ENCODE measurements at regions of chr17 and their contacts with region 1.

Region 1: GRCh38 chr17:76681222-76682137 is 29.3 kb downstream of the MXRA7 start:
- DNase-seq: no peak
- H3K4me3 ChIP-seq: no peak overlapping the region
- H3K27me3 ChIP-seq: no peaks in the 10 kb centered on the region
- CTCF ChIP-seq: peak; percentile 87

Region 2: GRCh38 chr17:76523084-76524037 is 158.1 kb before region 1 on chr17:
- CTCF ChIA-PET with region 1: interaction called, 21 read pairs
- POLR2A ChIA-PET with region 1: no interaction called
- DNase-seq: no peak
- H3K4me3 ChIP-seq: no peak overlapping the region
- H3K27me3 ChIP-seq: no peaks in the 10 kb centered on the region
- CTCF ChIP-seq: peak; percentile 100

Region 3: GRCh38 chr17:76623271-76624146 is 58.0 kb before region 1 on chr17:
- CTCF ChIA-PET with region 1: interaction called, 14 read pairs
- POLR2A ChIA-PET with region 1: no interaction called
- DNase-seq: peak; percentile 48
- H3K4me3 ChIP-seq: no peak overlapping the region
- H3K27me3 ChIP-seq: peaks cover 11% of the 10 kb centered on the region
- CTCF ChIP-seq: peak; percentile 91

Region 4: DNA sequence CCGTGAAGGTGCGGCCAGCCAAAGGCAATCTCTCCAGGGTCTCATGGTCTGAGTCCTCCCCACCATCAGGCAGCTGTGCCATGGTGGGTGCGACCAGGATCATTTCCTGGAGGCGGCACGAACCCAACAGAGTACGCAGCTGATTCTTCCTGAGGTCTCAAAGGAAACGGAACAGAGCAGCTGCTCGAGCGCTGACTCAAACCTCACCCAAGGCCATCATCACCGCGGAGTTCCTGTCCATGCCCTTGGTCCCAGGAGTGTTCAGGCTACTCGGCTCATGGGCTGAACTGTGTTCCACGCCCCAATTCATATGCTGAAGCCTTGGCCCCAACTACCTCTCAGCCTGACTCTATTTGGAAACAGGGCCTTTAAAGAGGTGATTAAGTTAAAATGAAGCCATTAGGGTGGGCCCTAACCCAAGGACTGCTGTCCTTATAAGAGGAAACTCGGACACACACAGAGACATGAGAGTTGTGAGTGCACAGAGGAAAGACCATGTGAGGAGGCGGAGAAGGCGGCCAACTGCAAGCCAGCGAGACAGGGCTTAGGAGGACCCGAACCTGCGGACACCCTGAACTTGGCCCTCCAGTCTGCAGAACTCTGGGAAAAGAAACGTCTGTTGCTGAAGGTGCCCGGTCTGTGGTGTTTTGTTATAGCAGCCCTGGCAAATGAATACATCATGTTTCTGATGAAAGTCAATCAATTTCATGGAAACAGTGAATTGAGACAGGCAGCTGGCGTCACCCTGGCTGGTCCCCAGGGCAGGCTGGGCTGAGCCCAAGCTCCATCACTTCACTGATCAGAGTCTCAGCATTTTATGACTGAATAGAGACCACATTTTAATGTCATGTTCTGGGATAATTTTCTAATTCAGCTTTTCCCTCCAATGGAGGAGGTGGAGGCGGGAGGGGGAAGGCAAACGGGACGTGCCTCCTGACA is 15.6 kb after region 1 on chr17:
- CTCF ChIA-PET with region 1: interaction called, 11 read pairs
- POLR2A ChIA-PET with region 1: no interaction called
- DNase-seq: no peak
- H3K4me3 ChIP-seq: no peak overlapping the region
- H3K27me3 ChIP-seq: no peaks in the 10 kb centered on the region
- CTCF ChIP-seq: no peak

Region 5: DNA sequence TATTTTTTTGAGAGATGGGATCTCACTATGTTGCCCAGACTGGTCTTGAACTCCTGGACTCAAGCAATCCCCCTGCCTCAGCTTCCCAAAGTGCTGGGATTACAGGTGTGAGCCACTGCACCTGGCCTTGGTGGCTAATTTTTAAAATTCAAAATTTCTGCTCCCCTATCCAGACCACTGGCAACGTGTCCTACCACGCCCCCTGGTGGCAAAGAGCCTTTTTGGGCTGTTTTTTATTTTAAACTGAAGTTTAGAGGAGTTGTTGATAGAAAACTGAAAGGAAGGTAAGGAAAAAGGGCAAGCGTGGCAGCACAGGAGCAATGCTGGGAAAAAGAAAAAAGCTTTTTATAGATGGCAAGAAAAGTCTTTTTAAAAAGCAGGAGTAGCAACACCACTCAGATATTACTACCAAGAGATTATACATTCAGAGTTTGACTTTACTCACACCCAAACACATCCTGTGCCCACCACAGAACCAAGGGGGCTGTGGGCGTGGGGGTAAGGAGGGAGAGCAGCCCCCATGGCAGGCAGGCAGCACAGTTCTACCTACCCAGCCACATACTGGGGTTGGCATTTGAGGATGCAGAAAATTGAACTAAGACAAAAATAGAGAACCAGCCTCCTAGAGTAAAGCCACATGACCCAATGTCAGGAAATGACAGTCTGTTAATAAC is 33.5 kb after region 1 on chr17:
- CTCF ChIA-PET with region 1: interaction called, 20 read pairs
- POLR2A ChIA-PET with region 1: no interaction called
- DNase-seq: no peak
- H3K4me3 ChIP-seq: no peak overlapping the region
- H3K27me3 ChIP-seq: no peaks in the 10 kb centered on the region
- CTCF ChIP-seq: peak; percentile 81

Region 6: GRCh38 chr17:76862494-76862893 is 181.0 kb after region 1 on chr17:
- CTCF ChIA-PET with region 1: no interaction called
- POLR2A ChIA-PET with region 1: no interaction called
- DNase-seq: no peak
- H3K4me3 ChIP-seq: no peak overlapping the region
- H3K27me3 ChIP-seq: peaks cover 1% of the 10 kb centered on the region; the same call in 1 of the 2 replicates
- CTCF ChIP-seq: no peak

Measured in BJ (cell line).